Stomach (tissue), 19 donors: ENCODE measurements at regions of chr1 and their contacts with region 1.

Region 1: DNA sequence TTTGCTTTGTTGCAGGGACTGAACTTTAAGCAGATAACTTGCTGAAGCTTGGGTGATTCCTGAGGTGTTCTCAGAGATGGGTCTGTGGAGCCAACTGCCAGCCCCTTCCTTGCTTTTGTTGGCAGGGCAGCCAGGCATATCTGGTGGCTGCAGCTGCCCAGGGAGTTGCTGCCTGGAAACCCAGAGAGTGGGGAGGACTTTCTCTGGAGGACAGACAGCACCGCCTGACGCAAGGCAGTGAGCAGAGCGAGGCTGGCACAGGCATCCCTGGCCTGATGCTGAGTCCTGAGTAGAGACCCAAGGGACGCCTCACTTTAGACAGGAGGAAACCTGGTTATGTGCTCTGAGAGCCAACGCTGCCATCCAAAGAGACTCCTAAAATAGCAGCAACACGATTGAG is 9.8 kb upstream of the OLFML2B start:
- DNase-seq: peak in 1 of 2 donors; percentile 47
- H3K4me3 ChIP-seq: no peak overlapping the region
- H3K27ac ChIP-seq: no peak overlapping the region
- H3K4me1 ChIP-seq: no peaks in the 10 kb centered on the region
- H3K27me3 ChIP-seq: peaks cover 0 to 9% (median 0%) of the 10 kb centered on the region in 3 donors
- CTCF ChIP-seq: no peak
- EP300 ChIP-seq: no peak
- POLR2A ChIP-seq: no peak

Region 2: GRCh38 chr1:161792740-161793139 is 240.7 kb before region 1 on chr1:
- intact Hi-C with region 1: loop called (anchors 5 kb)
- DNase-seq: peak in 1 of 2 donors; percentile 74
- H3K4me3 ChIP-seq: no peak overlapping the region
- H3K27ac ChIP-seq: no peak overlapping the region
- H3K4me1 ChIP-seq: peaks cover 0 to 15% (median 10%) of the 10 kb centered on the region in 4 donors
- H3K27me3 ChIP-seq: no peaks in the 10 kb centered on the region
- CTCF ChIP-seq: peak in 4 of 7 experiments; percentile 24 to 65 (median 42)
- EP300 ChIP-seq: no peak
- POLR2A ChIP-seq: no peak

Region 3: GRCh38 chr1:162107911-162108310 is 74.5 kb after region 1 on chr1:
- intact Hi-C with region 1: no loop called
- DNase-seq: no peak
- H3K4me3 ChIP-seq: no peak overlapping the region
- H3K27ac ChIP-seq: no peak overlapping the region
- H3K4me1 ChIP-seq: peaks cover 0 to 8% (median 0%) of the 10 kb centered on the region in 4 donors
- H3K27me3 ChIP-seq: no peaks in the 10 kb centered on the region
- CTCF ChIP-seq: no peak
- EP300 ChIP-seq: no peak
- POLR2A ChIP-seq: no peak